ENCODE measurements at regions of chr17 and their contacts with region 1.

Region 1: DNA sequence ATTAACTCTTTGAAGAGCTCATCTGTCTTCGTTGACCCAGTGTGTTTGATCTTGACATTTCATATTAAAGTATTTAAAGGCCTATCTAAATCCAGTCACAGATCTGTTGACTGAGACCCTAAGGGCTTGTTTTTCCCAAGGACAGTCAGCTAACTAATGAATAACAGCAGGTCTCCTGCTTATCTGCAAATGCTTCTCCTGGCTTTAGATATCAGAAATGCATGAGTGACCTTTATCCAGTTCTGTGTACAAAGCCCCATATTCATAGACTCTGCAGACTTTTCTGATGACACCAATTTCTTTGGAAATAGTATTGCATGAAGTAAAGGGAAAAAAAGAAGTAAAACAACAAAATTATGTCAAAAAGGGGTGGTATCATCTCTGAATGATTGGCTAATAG is 70.3 kb downstream of the YPEL2 start:
- DNase-seq: no peak
- H3K4me3 ChIP-seq: no peak overlapping the region
- H3K27ac ChIP-seq: no peak overlapping the region
- H3K4me1 ChIP-seq: peaks cover 10% of the 10 kb centered on the region
- H3K27me3 ChIP-seq: no peaks in the 10 kb centered on the region
- CTCF ChIP-seq: no peak

Region 2: GRCh38 chr17:59416184-59416583 is 14.5 kb after region 1 on chr17:
- CTCF ChIA-PET with region 1: no interaction called
- POLR2A ChIA-PET with region 1: no interaction called
- intact Hi-C with region 1: loop called (anchors 1 kb)
- DNase-seq: no peak
- H3K4me3 ChIP-seq: no peak overlapping the region
- H3K27ac ChIP-seq: no peak overlapping the region
- H3K4me1 ChIP-seq: no peaks in the 10 kb centered on the region
- H3K27me3 ChIP-seq: no peaks in the 10 kb centered on the region
- CTCF ChIP-seq: no peak

Measured in PC-9 (cell line).